Heart right ventricle (tissue), 16 donors: ENCODE measurements at regions of chr2 and their contacts with region 1.

Region 1: GRCh38 chr2:186544255-186544675 is 45.6 kb upstream of the ITGAV start:
- DNase-seq: no peak
- ATAC-seq: peak in 7 of 8 donors; percentile 41 to 82 (median 63)
- H3K4me3 ChIP-seq: no peak overlapping the region
- H3K27ac ChIP-seq: peak overlapping the region in 7 of 10 donors; percentile 11 to 86 (median 32)
- H3K4me1 ChIP-seq: peaks cover 0 to 33% (median 13%) of the 10 kb centered on the region in 9 donors
- H3K27me3 ChIP-seq: no peaks in the 10 kb centered on the region
- CTCF ChIP-seq: no peak

Region 2: DNA sequence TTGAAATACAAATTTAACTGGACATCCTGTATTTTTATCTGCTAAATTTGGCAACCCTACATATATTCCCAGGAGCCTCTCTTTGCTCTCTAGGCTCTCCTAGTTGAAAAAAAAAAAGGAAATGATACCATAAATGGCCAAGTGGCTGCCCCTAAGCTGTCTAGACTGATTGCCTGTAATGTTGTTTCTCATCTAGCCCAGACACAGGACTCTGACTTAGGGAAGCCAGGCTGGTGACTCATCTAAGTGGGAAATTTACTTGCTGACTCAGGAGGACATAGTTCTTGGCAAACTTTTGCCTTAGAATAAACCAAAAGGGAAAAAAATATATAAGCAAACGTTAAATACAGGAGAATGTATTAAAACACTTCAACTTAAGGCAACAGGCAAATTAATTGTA is 31.0 kb after region 1 on chr2:
- intact Hi-C with region 1: loop called in 1 of 10 experiments (anchors 5 kb)
- DNase-seq: peak in 1 of 2 donors; percentile 53
- ATAC-seq: peak; percentile 88 to 98 (median 94)
- H3K4me3 ChIP-seq: no peak overlapping the region
- H3K27ac ChIP-seq: peak overlapping the region in 1 of 10 donors; percentile 53
- H3K4me1 ChIP-seq: peaks cover 0 to 25% (median 5%) of the 10 kb centered on the region in 9 donors
- H3K27me3 ChIP-seq: no peaks in the 10 kb centered on the region
- CTCF ChIP-seq: no peak